ENCODE measurements at regions of chr22 and their contacts with region 1.

Region 1: DNA sequence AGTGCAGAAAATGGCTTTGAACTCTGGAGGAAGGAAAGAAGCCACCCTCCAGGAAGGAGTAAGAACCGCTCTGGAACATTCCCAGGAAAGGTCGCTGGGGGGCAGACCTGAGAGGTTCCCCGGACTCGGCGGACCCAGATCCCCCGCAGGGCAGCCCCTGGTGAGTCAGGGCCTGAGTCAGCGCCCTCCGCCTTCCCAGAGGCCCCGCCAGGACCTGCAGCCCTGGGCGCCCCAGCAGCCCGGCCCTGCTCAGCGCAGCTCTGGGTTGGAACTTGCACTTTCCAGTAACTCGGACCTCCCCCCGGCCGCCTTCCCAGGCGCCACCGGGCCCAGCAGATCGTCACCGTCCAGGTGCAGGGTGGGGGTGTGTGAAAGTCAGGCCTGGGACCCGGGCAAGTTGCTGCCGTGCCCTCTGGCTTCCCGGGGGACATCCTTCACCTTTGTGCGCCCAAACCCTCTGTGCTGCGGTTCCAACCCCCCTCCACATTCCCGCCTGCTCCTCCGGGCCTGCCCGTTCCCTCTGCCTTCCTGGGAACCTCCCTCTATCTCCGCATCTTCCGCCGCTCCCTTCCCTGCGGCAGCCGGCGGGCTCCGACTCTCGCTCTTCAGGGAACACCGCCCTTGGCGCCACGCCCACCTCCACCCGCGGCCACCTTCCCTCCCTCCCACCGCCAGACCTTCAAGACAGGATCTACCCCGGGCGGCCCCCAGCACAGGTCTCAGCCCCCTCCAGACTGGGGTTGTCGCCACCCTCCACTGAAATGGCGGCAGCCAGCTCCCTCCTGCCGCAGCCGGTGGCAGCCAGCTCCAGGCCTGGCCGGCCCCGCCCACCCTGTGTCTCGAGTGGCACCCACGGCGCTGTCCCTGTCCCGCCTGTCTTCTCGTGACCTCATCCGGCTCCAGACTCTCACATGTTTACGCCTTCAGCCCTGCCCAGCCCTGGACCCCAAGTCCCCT is 36.8 kb upstream of the WNT7B start:
- DNase-seq: peak; percentile 75 to 95
- ATAC-seq: peak; percentile 96 to 98
- H3K4me3 ChIP-seq: peak overlapping the region; percentile 52
- H3K27ac ChIP-seq: peak overlapping the region; percentile 95 to 98
- H3K4me1 ChIP-seq: peaks cover 35% of the 10 kb centered on the region
- CTCF ChIP-seq: peak; percentile 61
- EP300 ChIP-seq: peak in 1 of 2 experiments; percentile 14; a peak in 1 of 5 replicates
- POLR2A ChIP-seq: peak; percentile 45
- RAD21 ChIP-seq: peak; percentile 53 to 70

Region 2: GRCh38 chr22:46027192-46028105 is 13.7 kb after region 1 on chr22:
- CTCF ChIA-PET with region 1: interaction called, 38 read pairs
- POLR2A ChIA-PET with region 1: interaction called, 6 read pairs
- DNase-seq: no peak
- ATAC-seq: no peak
- H3K4me3 ChIP-seq: 0 out of 3 replicates have a peak overlapping the region, but pooled peaks have one; percentile 23
- H3K27ac ChIP-seq: peak overlapping the region; percentile 44 to 79; a peak in 4 of 6 replicates
- H3K4me1 ChIP-seq: peaks cover 11% of the 10 kb centered on the region; the same call in 2 of the 3 replicates
- CTCF ChIP-seq: no peak
- EP300 ChIP-seq: no peak
- POLR2A ChIP-seq: no peak
- RAD21 ChIP-seq: no peak

Region 3: GRCh38 chr22:46042786-46043185 is 29.0 kb after region 1 on chr22:
- CTCF ChIA-PET with region 1: interaction called, 66 read pairs
- POLR2A ChIA-PET with region 1: interaction called, 63 read pairs
- DNase-seq: no peak
- ATAC-seq: no peak
- H3K4me3 ChIP-seq: no peak overlapping the region
- H3K27ac ChIP-seq: no peak overlapping the region
- H3K4me1 ChIP-seq: no peaks in the 10 kb centered on the region
- CTCF ChIP-seq: no peak
- EP300 ChIP-seq: no peak
- POLR2A ChIP-seq: no peak
- RAD21 ChIP-seq: no peak

Region 4: GRCh38 chr22:46071451-46072109 is 57.8 kb after region 1 on chr22:
- CTCF ChIA-PET with region 1: interaction called, 15 read pairs
- POLR2A ChIA-PET with region 1: interaction called, 8 read pairs
- DNase-seq: peak in 1 of 2 experiments; percentile 92
- ATAC-seq: peak; percentile 9 to 37; a peak in 4 of 6 replicates
- H3K4me3 ChIP-seq: peak overlapping the region; percentile 73
- H3K27ac ChIP-seq: peak overlapping the region; percentile 99 to 100
- H3K4me1 ChIP-seq: peaks cover 17% of the 10 kb centered on the region
- CTCF ChIP-seq: no peak
- EP300 ChIP-seq: no peak
- POLR2A ChIP-seq: peak; percentile 87
- RAD21 ChIP-seq: no peak

Region 5: GRCh38 chr22:46116491-46116958 is 102.8 kb after region 1 on chr22:
- CTCF ChIA-PET with region 1: interaction called, 108 read pairs
- POLR2A ChIA-PET with region 1: no interaction called
- DNase-seq: peak; percentile 80 to 85
- ATAC-seq: peak; percentile 46 to 77
- H3K4me3 ChIP-seq: no peak overlapping the region
- H3K27ac ChIP-seq: peak overlapping the region; percentile 60 to 62; a peak in 5 of 6 replicates
- H3K4me1 ChIP-seq: peaks cover 53% of the 10 kb centered on the region
- CTCF ChIP-seq: peak; percentile 78
- EP300 ChIP-seq: no peak
- POLR2A ChIP-seq: no peak
- RAD21 ChIP-seq: peak; percentile 80 to 89